WTC11 (cell line): ENCODE measurements at regions of chr1 and their contacts with region 1.

Region 1: DNA sequence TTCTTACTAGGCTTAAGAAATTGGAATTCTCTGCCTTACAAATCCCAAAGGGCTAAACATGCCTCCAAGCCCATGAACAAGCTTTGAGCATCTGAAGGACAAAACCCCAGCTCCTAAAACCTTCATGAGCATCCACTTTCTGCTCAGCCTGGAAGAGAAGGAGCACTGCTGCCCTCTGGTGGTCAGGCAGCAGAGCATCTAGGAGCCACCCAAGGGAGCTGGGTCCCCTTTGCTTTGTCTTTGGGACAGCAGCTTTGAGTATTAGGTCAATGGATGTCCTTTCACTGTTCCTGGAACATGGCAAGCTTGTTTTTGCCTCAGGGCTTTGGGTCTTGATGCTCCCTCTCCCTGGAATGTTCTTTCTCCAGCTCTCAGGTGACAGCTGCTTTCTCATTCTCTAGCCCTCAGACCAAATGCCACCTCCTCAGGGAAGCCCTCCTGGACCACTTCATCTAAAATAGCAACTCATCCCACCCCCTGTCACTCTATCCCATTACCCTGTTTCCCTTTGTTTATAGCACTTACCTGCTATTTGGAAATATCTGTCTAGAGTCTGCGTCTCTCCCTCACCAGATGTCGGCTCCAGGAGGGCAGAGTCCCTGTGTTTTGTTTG is 25.7 kb downstream of the RAB7B start:
- DNase-seq: peak; percentile 82
- ATAC-seq: peak; percentile 86
- H3K4me3 Mint-ChIP-seq: no peak overlapping the region
- H3K27ac Mint-ChIP-seq: no peak overlapping the region
- H3K4me1 Mint-ChIP-seq: peaks cover 5% of the 10 kb centered on the region; the same call in 1 of the 2 replicates
- H3K27me3 Mint-ChIP-seq: peaks cover 3% of the 10 kb centered on the region; the same call in 1 of the 2 replicates
- CTCF ChIP-seq: peak; percentile 93

Region 2: DNA sequence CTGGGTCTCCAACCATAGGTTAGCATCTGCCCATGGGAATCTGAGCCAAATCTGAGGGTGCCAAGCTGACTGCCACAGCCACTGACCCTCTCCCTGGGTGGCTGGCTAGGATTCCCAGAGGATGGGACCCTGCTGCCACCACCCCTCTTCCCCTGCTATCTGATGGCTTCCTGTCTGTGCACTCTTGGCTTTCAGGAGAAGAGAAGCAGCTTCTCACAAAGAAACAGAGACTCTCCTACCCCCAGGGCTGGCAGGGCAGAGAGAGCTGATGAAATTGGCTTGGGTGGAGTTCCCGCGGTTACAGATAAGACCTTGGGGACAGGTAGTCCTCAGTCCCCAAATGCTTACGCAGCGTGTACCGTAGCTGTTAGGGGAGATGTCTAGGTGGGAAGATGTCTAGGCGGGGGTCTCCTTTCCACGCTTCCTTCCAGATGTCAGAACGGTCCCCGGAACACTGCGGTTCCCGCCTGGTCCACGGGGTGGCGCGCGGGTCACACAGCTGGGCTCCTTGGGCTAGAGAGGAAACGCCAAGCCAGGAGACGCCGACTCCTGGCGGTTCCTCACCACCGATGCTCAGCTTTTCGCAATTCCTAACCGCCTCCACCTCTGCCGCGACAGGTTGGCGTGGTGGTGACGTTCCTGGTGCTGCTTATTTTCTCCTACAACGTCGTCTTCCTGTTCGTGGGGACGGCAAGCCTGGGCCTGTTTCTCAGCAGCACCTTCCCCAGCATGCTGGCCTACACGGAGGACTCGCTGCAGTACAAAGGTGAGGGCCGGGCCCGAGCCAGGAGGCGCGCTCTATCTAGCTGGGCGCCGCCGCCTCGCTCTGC is 385.8 kb before region 1 on chr1:
- CTCF ChIA-PET with region 1: interaction called, 29 read pairs
- POLR2A ChIA-PET with region 1: no interaction called
- DNase-seq: peak; percentile 97
- ATAC-seq: peak; percentile 86
- H3K4me3 Mint-ChIP-seq: peak overlapping the region; percentile 72
- H3K27ac Mint-ChIP-seq: peak overlapping the region; percentile 50; the same call in 1 of the 2 replicates
- H3K4me1 Mint-ChIP-seq: peaks cover 8% of the 10 kb centered on the region
- H3K27me3 Mint-ChIP-seq: peaks cover 10% of the 10 kb centered on the region
- CTCF ChIP-seq: peak; percentile 78

Region 3: GRCh38 chr1:205775015-205775716 is 202.3 kb before region 1 on chr1 and contains the start of gene RAB29:
- CTCF ChIA-PET with region 1: interaction called, 15 read pairs
- POLR2A ChIA-PET with region 1: no interaction called
- DNase-seq: peak; percentile 85
- ATAC-seq: peak; percentile 93
- H3K4me3 Mint-ChIP-seq: peak within 1 kb of the TSS; percentile 86
- H3K27ac Mint-ChIP-seq: no peak within 1 kb of the TSS
- H3K4me1 Mint-ChIP-seq: peaks cover 13% of the 10 kb centered on the region
- H3K27me3 Mint-ChIP-seq: peaks cover 62% of the 10 kb centered on the region
- CTCF ChIP-seq: no peak
- total RNA-seq, gene RAB29: 10.7 to 11.2 TPM (median 11.0 TPM) in 3 replicates

Region 4: DNA sequence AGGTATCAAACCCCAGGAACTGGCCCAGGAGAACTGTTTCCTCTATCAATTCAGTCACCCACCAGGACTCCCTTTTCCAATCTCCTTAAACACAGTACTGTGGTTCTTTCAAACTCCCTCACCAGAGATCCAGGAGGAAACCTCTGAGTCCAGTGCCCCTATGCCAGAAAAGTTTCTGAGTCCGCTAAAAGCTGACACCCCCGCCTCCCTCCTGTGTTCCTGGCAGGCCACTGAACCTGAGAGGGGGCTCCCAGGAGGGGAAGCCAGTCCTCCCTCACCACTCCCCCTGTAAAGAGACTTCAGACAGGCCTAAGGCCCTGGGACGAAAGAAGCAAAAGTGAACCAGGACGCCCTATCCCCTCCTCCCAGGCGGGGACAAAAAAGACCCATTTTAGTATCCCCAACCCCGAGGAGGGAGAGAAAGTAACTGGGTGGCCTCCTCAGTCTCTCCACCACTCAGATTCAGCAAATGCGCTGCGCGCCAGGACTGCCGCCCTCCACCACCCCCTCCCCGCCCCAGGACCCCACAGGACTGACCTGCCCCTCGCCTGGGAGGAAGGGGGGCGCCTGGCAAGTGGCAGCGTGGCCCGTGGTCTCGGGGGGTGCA is 165.1 kb before region 1 on chr1:
- CTCF ChIA-PET with region 1: interaction called, 27 read pairs
- POLR2A ChIA-PET with region 1: no interaction called
- DNase-seq: peak; percentile 43
- ATAC-seq: peak; percentile 31
- H3K4me3 Mint-ChIP-seq: peak overlapping the region; percentile 90
- H3K27ac Mint-ChIP-seq: peak overlapping the region; percentile 10
- H3K4me1 Mint-ChIP-seq: peaks cover 37% of the 10 kb centered on the region
- H3K27me3 Mint-ChIP-seq: peaks cover 16% of the 10 kb centered on the region; the same call in 1 of the 2 replicates
- CTCF ChIP-seq: no peak

Region 5: DNA sequence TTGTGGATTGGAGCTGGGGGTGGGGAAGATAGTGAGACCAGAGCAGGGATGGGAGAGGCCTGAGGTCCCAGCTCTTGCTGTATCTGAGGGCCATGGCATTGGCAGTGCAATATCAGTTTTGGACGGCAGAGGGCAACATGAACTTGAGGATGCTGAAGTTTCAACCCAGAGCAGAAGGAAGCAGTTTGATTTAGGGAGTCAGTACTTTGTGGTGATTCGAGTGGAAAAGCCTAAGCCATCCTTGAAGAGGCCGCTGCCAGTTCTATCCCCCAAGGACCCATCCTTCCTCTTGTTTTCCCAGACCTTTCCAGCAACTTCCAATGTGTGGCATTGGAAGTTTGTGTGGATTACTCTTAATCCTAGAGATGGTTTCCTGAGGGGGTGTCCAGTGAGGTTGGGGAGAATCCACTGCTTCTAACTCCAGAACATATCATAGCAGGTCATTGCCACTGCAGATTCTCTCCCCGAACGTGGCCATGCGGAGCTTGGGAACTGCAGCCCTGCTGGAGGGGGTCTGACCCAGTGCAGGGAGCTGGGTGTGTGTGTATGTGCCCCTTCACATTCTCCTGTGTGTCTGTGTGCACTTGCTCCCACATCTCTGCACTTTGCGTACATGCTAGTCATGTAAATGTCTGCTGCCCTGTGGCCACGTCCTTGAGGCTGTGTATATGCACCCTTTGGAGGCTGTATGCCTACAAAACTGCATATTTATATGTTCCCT is 58.3 kb before region 1 on chr1:
- CTCF ChIA-PET with region 1: interaction called, 557 read pairs
- POLR2A ChIA-PET with region 1: interaction called, 6 read pairs
- DNase-seq: peak; percentile 89
- ATAC-seq: peak; percentile 96
- H3K4me3 Mint-ChIP-seq: no peak overlapping the region
- H3K27ac Mint-ChIP-seq: no peak overlapping the region
- H3K4me1 Mint-ChIP-seq: peaks cover 6% of the 10 kb centered on the region
- H3K27me3 Mint-ChIP-seq: no peaks in the 10 kb centered on the region
- CTCF ChIP-seq: peak; percentile 90

Region 6: GRCh38 chr1:205950280-205950679 is 27.2 kb before region 1 on chr1:
- CTCF ChIA-PET with region 1: interaction called, 62 read pairs
- POLR2A ChIA-PET with region 1: no interaction called
- DNase-seq: no peak
- ATAC-seq: no peak
- H3K4me3 Mint-ChIP-seq: no peak overlapping the region
- H3K27ac Mint-ChIP-seq: no peak overlapping the region
- H3K4me1 Mint-ChIP-seq: peaks cover 19% of the 10 kb centered on the region
- H3K27me3 Mint-ChIP-seq: no peaks in the 10 kb centered on the region; the same call in 1 of the 2 replicates
- CTCF ChIP-seq: no peak

Region 7: DNA sequence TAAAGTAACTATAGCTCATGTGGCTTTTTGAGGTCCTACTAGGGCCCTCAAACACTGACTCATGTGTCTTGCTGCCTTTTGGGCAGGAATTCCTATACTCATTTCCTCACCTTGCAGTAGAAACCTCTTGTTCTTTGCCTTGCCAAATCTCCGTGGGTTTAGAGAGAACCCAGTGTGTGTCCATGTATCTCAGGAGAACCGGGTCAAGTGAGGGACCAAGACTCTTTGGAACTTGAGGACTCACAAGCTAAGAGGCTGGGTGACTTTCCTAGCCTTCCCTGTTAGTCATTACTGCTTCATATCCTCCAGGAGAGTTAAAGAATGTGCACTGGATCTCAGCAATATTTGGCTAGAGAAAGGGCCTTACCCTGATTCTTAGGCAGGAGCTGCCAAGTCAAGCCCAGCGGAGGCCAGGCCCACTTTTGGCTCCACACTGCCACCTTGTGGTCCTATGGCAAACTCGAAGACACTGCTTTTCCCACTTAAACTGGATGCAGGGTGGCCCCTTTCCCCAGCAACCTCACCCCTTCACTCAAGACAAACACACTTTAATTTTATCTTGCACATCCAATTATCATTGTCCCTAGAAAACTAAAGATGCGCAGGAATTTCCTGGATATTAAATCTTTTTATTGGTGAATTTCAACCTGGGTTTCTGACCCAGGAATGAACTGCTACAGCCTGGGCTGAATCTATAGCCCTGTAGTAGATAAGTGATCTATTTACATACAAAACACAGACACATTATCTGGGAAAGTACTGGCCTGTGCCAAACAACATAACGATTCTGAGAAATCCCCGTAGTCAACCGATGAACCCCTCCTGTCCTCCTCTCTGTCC is 129.0 kb after region 1 on chr1:
- CTCF ChIA-PET with region 1: interaction called, 43 read pairs
- POLR2A ChIA-PET with region 1: no interaction called
- DNase-seq: peak; percentile 86
- ATAC-seq: peak; percentile 95
- H3K4me3 Mint-ChIP-seq: no peak overlapping the region
- H3K27ac Mint-ChIP-seq: no peak overlapping the region
- H3K4me1 Mint-ChIP-seq: no peaks in the 10 kb centered on the region
- H3K27me3 Mint-ChIP-seq: no peaks in the 10 kb centered on the region
- CTCF ChIP-seq: peak; percentile 78